Posterior cingulate gyrus (tissue), 11 donors: ENCODE measurements at regions of chr1 and their contacts with region 1.

Region 1: GRCh38 chr1:152052606-152053005 is 15.8 kb upstream of the S100A11 start:
- DNase-seq: peak; percentile 56 to 96 (median 86)

Region 2: DNA sequence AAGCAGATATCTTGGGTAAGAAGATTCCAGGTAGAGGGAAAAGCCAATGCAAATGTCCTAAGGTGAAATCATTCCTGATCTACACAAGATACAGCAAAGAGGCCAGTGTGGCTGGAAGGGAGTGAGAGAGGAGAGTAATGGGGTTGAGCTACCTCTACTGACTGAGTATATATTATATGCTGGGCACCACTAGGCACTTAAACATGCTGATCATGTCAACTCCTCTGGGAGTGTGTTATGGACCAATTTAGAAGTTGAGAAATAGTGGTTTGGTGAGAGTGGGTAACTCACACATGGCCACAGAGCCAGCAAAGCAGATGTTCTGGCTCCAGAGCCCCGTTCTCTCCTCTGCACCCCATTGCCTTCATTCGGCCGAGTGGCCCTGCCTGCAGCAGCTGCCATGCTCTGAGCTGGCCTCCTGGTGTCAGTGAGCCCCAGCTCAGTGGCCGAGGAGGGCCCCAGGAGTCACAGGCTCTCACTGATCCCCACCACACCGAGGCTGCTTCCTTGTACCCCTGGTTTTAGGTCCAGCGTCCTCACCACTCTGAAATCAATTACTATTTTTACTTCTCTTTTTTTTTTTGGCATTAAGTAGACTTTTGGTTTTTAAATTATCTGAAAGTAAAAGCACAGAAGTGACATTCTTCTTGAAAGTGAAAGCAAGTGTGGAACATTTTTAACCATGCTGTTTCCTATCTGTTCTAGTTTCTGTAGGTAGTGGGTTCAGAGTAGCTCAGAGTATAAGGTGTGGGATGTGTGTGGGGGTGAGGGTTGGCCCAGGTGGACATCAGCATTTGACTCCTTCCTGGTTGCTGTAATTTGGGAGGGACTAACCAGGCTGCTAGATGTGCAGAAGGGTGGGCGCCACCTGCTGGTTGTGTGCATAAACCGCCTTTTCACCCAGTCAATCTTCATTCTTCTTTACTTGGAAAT is 407.3 kb after region 1 on chr1:
- intact Hi-C with region 1: loop called (anchors 2 kb)
- DNase-seq: peak in 9 of 10 donors; percentile 34 to 92 (median 74)